Breast epithelium (tissue), 4 donors: ENCODE measurements at regions of chr13 and their contacts with region 1.

Region 1: GRCh38 chr13:114177245-114178010 is 1.6 kb upstream of the CFAP97D2 start:
- DNase-seq: no peak
- H3K4me3 ChIP-seq: no peak overlapping the region
- H3K27ac ChIP-seq: no peak overlapping the region
- H3K4me1 ChIP-seq: no peaks in the 10 kb centered on the region
- H3K27me3 ChIP-seq: no peaks in the 10 kb centered on the region
- CTCF ChIP-seq: no peak
- POLR2A ChIP-seq: no peak

Region 2: GRCh38 chr13:113573065-113573464 is 604.4 kb before region 1 on chr13:
- intact Hi-C with region 1: no loop called
- DNase-seq: no peak
- H3K4me3 ChIP-seq: no peak overlapping the region
- H3K27ac ChIP-seq: no peak overlapping the region
- H3K4me1 ChIP-seq: no peaks in the 10 kb centered on the region
- H3K27me3 ChIP-seq: peaks cover 0 to 4% of the 10 kb centered on the region in 2 donors
- CTCF ChIP-seq: no peak
- POLR2A ChIP-seq: no peak

Region 3: DNA sequence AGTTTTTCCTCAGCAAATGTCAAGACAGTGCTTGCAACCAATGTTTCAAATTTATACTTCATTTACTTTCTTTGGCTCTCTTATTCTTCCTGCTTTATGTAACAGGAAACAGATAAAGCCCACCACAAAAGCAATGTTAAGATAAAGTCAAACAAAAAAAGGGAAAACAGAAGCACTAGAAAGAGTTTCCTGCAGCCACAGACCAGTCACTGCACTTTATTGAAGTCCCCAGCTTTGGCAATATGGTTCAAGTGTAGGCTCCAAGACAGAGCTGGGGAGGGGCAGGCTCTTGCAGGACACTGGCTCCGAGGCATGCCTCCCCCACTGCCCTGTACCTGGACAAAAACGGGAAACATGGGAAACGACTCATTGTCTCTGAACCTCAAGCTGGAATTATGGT is 42.0 kb after region 1 on chr13:
- intact Hi-C with region 1: loop called (anchors 2 kb)
- DNase-seq: no peak
- H3K4me3 ChIP-seq: no peak overlapping the region
- H3K27ac ChIP-seq: no peak overlapping the region
- H3K4me1 ChIP-seq: no peaks in the 10 kb centered on the region
- H3K27me3 ChIP-seq: no peaks in the 10 kb centered on the region
- CTCF ChIP-seq: no peak
- POLR2A ChIP-seq: no peak